Caco-2 (cell line): ENCODE measurements at regions of chr11 and their contacts with region 1.

Region 1: GRCh38 chr11:20022363-20023081 is 137.8 kb downstream of the DBX1 start:
- DNase-seq: peak; percentile 57 to 62
- H3K4me3 ChIP-seq: peak overlapping the region; percentile 41
- H3K4me3 Mint-ChIP-seq: no peak overlapping the region
- H3K27ac Mint-ChIP-seq: peak overlapping the region; percentile 74
- H3K4me1 ChIP-seq: peaks cover 85% of the 10 kb centered on the region
- H3K4me1 Mint-ChIP-seq: peaks cover 16% of the 10 kb centered on the region
- H3K27me3 ChIP-seq: no peaks in the 10 kb centered on the region
- H3K27me3 Mint-ChIP-seq: no peaks in the 10 kb centered on the region
- CTCF ChIP-seq: no peak

Region 2: GRCh38 chr11:19912958-19913892 is 109.3 kb before region 1 on chr11:
- CTCF ChIA-PET with region 1: no interaction called
- POLR2A ChIA-PET with region 1: no interaction called
- intact Hi-C with region 1: loop called (anchors 1 kb)
- DNase-seq: no peak
- H3K4me3 ChIP-seq: no peak overlapping the region
- H3K4me3 Mint-ChIP-seq: peak overlapping the region; percentile 30
- H3K27ac Mint-ChIP-seq: peak overlapping the region; percentile 31
- H3K4me1 ChIP-seq: peaks cover 31% of the 10 kb centered on the region
- H3K4me1 Mint-ChIP-seq: peaks cover 54% of the 10 kb centered on the region
- H3K27me3 ChIP-seq: no peaks in the 10 kb centered on the region
- H3K27me3 Mint-ChIP-seq: no peaks in the 10 kb centered on the region
- CTCF ChIP-seq: no peak

Region 3: GRCh38 chr11:19978668-19979518 is 43.6 kb before region 1 on chr11:
- CTCF ChIA-PET with region 1: interaction called, 3 read pairs
- POLR2A ChIA-PET with region 1: no interaction called
- intact Hi-C with region 1: loop called (anchors 1 kb)
- DNase-seq: peak; percentile 63 to 74
- H3K4me3 ChIP-seq: no peak overlapping the region
- H3K4me3 Mint-ChIP-seq: peak overlapping the region; percentile 48
- H3K27ac Mint-ChIP-seq: peak overlapping the region; percentile 96
- H3K4me1 ChIP-seq: peaks cover 53% of the 10 kb centered on the region
- H3K4me1 Mint-ChIP-seq: peaks cover 52% of the 10 kb centered on the region
- H3K27me3 ChIP-seq: no peaks in the 10 kb centered on the region
- H3K27me3 Mint-ChIP-seq: no peaks in the 10 kb centered on the region
- CTCF ChIP-seq: no peak

Region 4: GRCh38 chr11:19987331-19987801 is 35.2 kb before region 1 on chr11:
- CTCF ChIA-PET with region 1: no interaction called
- POLR2A ChIA-PET with region 1: no interaction called
- intact Hi-C with region 1: loop called (anchors 1 kb)
- DNase-seq: peak; percentile 53 to 73
- H3K4me3 ChIP-seq: no peak overlapping the region
- H3K4me3 Mint-ChIP-seq: no peak overlapping the region
- H3K27ac Mint-ChIP-seq: peak overlapping the region; percentile 34
- H3K4me1 ChIP-seq: peaks cover 38% of the 10 kb centered on the region
- H3K4me1 Mint-ChIP-seq: peaks cover 49% of the 10 kb centered on the region
- H3K27me3 ChIP-seq: no peaks in the 10 kb centered on the region
- H3K27me3 Mint-ChIP-seq: no peaks in the 10 kb centered on the region
- CTCF ChIP-seq: no peak

Region 5: GRCh38 chr11:20002312-20003216 is 20.0 kb before region 1 on chr11:
- CTCF ChIA-PET with region 1: interaction called, 4 read pairs
- POLR2A ChIA-PET with region 1: no interaction called
- intact Hi-C with region 1: loop called (anchors 1 kb)
- DNase-seq: peak; percentile 84 to 92
- H3K4me3 ChIP-seq: no peak overlapping the region
- H3K4me3 Mint-ChIP-seq: peak overlapping the region; percentile 52
- H3K27ac Mint-ChIP-seq: peak overlapping the region; percentile 65
- H3K4me1 ChIP-seq: peaks cover 48% of the 10 kb centered on the region
- H3K4me1 Mint-ChIP-seq: peaks cover 42% of the 10 kb centered on the region
- H3K27me3 ChIP-seq: no peaks in the 10 kb centered on the region
- H3K27me3 Mint-ChIP-seq: no peaks in the 10 kb centered on the region
- CTCF ChIP-seq: no peak

Region 6: DNA sequence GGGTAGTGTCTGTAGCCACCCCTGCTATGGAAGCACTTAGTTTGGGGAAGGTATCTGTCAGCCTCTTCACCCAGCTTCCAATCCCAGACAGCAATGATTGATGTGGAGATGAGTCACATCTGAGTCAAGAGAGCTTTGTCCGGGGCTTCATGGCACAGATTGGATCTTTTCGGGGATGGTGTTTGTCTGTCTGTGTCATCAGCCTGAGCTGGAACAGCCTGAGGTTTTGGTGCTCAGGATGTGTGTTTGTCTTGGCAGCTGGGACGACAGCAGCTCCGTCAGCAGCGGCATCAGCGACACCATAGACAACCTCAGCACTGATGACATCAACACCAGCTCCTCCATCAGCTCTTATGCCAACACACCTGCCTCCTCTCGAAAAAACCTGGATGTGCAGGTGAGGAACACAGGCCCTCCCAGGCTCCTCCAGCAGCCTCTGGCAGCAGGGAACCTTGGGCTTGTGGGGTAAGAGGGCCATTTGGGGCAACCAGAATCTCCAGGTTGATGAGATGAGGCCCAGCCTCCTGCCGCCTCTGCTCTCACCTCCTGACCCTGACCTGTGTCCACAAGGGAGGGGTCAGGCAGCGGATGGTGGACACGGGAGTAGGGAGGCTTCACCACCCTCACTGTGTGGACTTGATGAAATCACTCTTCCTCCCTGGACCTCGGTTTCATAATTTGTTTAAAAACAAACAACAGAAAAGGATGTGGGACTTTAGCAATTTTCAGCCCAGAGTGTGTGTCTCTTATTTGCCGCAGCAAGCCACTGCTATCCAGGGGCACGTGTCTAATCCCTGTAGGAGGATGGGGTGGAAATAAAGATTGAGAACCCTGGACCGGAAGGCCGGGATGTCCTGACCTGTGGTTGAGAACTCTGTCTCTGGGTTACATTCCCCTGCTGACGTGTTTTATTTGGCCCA is 13.4 kb after region 1 on chr11:
- CTCF ChIA-PET with region 1: interaction called, 4 read pairs
- POLR2A ChIA-PET with region 1: no interaction called
- intact Hi-C with region 1: loop called (anchors 1 kb)
- DNase-seq: no peak
- H3K4me3 ChIP-seq: no peak overlapping the region
- H3K4me3 Mint-ChIP-seq: no peak overlapping the region
- H3K27ac Mint-ChIP-seq: peak overlapping the region; percentile 91
- H3K4me1 ChIP-seq: peaks cover 85% of the 10 kb centered on the region
- H3K4me1 Mint-ChIP-seq: peaks cover 70% of the 10 kb centered on the region
- H3K27me3 ChIP-seq: no peaks in the 10 kb centered on the region
- H3K27me3 Mint-ChIP-seq: no peaks in the 10 kb centered on the region
- CTCF ChIP-seq: no peak

Region 7: DNA sequence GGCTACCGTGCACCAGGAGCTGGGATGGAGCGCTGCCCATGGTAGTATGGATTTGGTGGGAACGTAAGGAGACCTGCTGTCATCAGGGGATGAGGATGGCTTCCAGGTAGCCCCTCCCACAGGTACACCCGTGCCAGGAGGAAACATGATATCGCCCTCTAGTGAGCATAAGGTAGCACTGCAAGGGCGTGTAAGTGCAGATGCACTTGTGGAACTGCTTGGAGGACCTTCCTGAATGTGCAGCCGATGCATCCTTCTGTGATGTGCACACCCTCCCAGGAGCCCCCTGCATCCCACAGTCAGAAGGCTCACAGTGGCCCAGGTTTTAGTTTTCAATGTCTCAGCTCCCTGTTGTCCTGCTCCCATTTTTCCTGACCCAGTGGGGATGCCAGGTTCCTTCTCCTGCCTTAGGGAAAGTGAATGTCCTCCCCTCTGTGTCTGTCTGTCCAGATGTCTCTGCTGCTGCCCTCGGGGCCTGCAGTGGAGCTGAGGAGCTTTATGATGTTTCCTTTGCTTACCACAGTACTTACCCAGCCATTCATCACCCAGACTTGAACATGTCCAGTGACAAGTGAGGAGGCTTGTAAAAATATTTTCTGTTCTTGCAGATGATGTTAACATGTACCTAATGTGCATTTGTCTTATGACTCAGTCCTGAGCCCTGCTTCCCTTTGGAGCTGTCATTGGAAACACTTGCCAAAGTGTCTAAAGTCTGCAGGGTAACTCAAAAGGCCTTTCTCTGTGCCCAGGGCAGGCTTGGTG is 88.6 kb after region 1 on chr11:
- CTCF ChIA-PET with region 1: no interaction called
- POLR2A ChIA-PET with region 1: no interaction called
- intact Hi-C with region 1: loop called (anchors 5 kb)
- DNase-seq: peak; percentile 78 to 86
- H3K4me3 ChIP-seq: no peak overlapping the region
- H3K4me3 Mint-ChIP-seq: no peak overlapping the region
- H3K27ac Mint-ChIP-seq: no peak overlapping the region
- H3K4me1 ChIP-seq: 0 out of 2 replicates have a peak, but pooled peaks cover 3% of the 10 kb centered on the region
- H3K4me1 Mint-ChIP-seq: no peaks in the 10 kb centered on the region
- H3K27me3 ChIP-seq: no peaks in the 10 kb centered on the region
- H3K27me3 Mint-ChIP-seq: no peaks in the 10 kb centered on the region
- CTCF ChIP-seq: peak; percentile 91 to 95